ENCODE measurements at regions of chr19 and their contacts with region 1.

Region 1: GRCh38 chr19:46392243-46392801 is 21.0 kb downstream of the CCDC8 start:
- DNase-seq: peak in 2 of 3 donors; percentile 17 to 53
- ATAC-seq: no peak
- H3K4me3 ChIP-seq: no peak overlapping the region
- H3K27ac ChIP-seq: no peak overlapping the region
- H3K4me1 ChIP-seq: no peaks in the 10 kb centered on the region
- H3K27me3 ChIP-seq: no peaks in the 10 kb centered on the region
- CTCF ChIP-seq: no peak
- POLR2A ChIP-seq: no peak

Region 2: GRCh38 chr19:46232029-46232428 is 160.3 kb before region 1 on chr19:
- intact Hi-C with region 1: no loop called
- DNase-seq: no peak
- ATAC-seq: peak in 1 of 4 donors; percentile 10
- H3K4me3 ChIP-seq: no peak overlapping the region
- H3K27ac ChIP-seq: no peak overlapping the region
- H3K4me1 ChIP-seq: no peaks in the 10 kb centered on the region
- H3K27me3 ChIP-seq: no peaks in the 10 kb centered on the region
- CTCF ChIP-seq: no peak
- POLR2A ChIP-seq: no peak

Region 3: GRCh38 chr19:46346821-46347571 is 45.3 kb before region 1 on chr19 and contains the start of gene PPP5C:
- intact Hi-C with region 1: loop called in 1 of 2 experiments (anchors 10 kb)
- DNase-seq: peak; percentile 92 to 93 (median 92)
- ATAC-seq: peak; percentile 85 to 90 (median 86)
- H3K4me3 ChIP-seq: peak within 1 kb of the TSS; percentile 89 to 100 (median 93)
- H3K27ac ChIP-seq: peak within 1 kb of the TSS; percentile 79 to 88 (median 83)
- H3K4me1 ChIP-seq: peaks cover 0 to 32% (median 12%) of the 10 kb centered on the region in 4 donors
- H3K27me3 ChIP-seq: no peaks in the 10 kb centered on the region
- CTCF ChIP-seq: peak; percentile 65 to 79 (median 66)
- POLR2A ChIP-seq: peak; percentile 70
- total RNA-seq, gene PPP5C: 23.9 to 47.8 (median 36.0) TPM

Region 4: DNA sequence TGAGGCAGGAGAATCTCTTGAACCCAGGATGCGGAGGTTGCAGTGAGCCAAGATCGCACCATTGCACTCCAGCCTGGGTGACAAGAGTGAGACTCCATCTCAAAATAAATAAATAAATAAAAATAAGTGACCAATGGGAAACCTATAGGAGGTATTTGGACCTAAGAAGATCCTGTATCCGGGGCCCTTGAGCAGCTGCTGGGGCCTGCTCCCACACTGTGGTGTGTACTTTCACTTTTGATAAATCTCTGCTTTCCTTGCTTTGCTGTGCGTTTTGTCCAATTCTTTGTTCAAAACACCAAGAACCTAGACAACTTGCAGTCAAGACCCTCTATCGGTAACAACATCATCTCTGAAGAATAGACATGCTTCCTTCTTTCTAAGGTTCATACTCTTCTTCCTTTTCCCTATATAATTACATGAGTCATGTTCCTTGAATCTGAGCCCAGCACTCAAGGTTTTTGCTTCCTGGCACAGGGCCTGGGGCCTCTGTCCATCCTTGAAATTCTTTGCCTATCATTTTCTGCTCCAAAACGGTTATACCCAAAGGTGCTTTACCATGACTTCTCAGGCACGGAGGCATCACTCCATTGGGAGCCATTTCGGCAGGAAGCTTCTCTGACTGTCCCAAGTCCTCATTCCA is 50.6 kb after region 1 on chr19:
- intact Hi-C with region 1: no loop called
- DNase-seq: no peak
- ATAC-seq: peak in 1 of 4 donors; percentile 30
- H3K4me3 ChIP-seq: no peak overlapping the region
- H3K27ac ChIP-seq: no peak overlapping the region
- H3K4me1 ChIP-seq: no peaks in the 10 kb centered on the region
- H3K27me3 ChIP-seq: no peaks in the 10 kb centered on the region
- CTCF ChIP-seq: no peak
- POLR2A ChIP-seq: no peak

Region 5: DNA sequence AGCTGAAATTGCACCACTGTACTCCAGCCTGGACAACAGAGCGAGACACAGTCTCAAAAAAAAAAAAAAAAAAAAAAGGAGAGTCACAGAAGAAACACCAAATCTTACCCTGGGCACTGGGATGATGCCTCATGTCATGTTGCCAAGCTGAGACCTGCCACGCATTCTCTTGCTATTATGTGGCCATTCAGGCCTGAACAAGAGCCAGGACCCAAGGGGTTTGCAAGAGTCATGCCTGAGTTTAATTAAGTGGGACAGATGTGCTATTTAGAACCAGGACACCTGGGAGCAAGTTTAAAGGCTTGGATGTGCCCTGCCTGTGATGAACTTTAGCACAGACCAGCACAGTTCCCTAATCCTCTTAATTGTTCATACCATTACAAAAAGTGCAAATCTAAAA is 69.2 kb after region 1 on chr19:
- intact Hi-C with region 1: no loop called
- DNase-seq: no peak
- ATAC-seq: no peak
- H3K4me3 ChIP-seq: no peak overlapping the region
- H3K27ac ChIP-seq: no peak overlapping the region
- H3K4me1 ChIP-seq: no peaks in the 10 kb centered on the region
- H3K27me3 ChIP-seq: no peaks in the 10 kb centered on the region
- CTCF ChIP-seq: no peak
- POLR2A ChIP-seq: no peak

Region 6: GRCh38 chr19:46571531-46571930 is 179.2 kb after region 1 on chr19:
- intact Hi-C with region 1: no loop called
- DNase-seq: no peak
- ATAC-seq: peak in 2 of 4 donors; percentile 37 to 44
- H3K4me3 ChIP-seq: no peak overlapping the region
- H3K27ac ChIP-seq: no peak overlapping the region
- H3K4me1 ChIP-seq: no peaks in the 10 kb centered on the region
- H3K27me3 ChIP-seq: no peaks in the 10 kb centered on the region
- CTCF ChIP-seq: no peak
- POLR2A ChIP-seq: no peak